BJ (cell line): ENCODE measurements at regions of chr6 and their contacts with region 1.

Region 1: GRCh38 chr6:111709615-111710398 is 104.1 kb upstream of the TRAF3IP2 start:
- DNase-seq: no peak
- H3K4me3 ChIP-seq: no peak overlapping the region
- H3K27me3 ChIP-seq: no peaks in the 10 kb centered on the region
- CTCF ChIP-seq: peak; percentile 53

Region 2: GRCh38 chr6:111777357-111777756 is 67.5 kb after region 1 on chr6:
- CTCF ChIA-PET with region 1: no interaction called
- POLR2A ChIA-PET with region 1: no interaction called
- DNase-seq: no peak
- H3K4me3 ChIP-seq: no peak overlapping the region
- H3K27me3 ChIP-seq: no peaks in the 10 kb centered on the region
- CTCF ChIP-seq: no peak

Region 3: DNA sequence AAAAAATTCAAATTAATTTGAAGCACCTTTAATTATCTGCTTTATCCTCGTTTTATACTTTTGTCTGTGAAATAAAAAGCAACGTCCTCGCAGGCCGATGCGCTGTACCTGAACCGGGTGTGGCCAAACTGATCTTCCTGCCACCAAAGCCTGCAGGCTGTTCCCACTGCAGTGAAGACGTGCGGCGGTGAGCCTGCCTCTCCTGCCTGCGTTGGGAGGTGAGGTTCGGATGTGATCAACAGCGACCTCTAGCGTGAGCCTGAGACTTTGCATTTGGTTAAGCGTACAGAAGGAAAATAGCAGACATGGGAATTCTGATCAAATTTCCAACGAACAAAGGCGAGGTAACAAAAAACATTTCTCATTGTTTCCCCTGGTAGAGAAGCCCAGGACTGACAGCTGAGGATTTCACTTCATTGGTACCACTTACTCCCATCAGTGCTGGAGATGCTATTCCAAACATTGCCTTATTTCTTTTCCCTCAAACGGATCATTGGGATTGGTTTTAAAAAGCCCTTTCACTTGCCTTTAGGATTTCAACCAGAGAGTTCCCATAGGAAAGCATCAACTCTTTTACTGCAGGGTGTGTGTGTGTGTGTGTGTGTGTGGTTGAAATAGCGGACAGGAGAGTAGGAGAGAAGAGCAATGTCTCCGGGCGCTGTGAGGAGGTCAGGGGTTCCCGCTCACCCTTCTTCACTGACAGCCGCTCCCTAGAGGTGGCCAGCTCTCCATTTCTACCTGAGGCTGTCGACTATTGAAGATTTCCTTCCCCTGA is 287.5 kb after region 1 on chr6:
- CTCF ChIA-PET with region 1: interaction called, 42 read pairs
- POLR2A ChIA-PET with region 1: interaction called, 5 read pairs
- DNase-seq: no peak
- H3K4me3 ChIP-seq: no peak overlapping the region
- H3K27me3 ChIP-seq: no peaks in the 10 kb centered on the region
- CTCF ChIP-seq: peak; percentile 86

Region 4: DNA sequence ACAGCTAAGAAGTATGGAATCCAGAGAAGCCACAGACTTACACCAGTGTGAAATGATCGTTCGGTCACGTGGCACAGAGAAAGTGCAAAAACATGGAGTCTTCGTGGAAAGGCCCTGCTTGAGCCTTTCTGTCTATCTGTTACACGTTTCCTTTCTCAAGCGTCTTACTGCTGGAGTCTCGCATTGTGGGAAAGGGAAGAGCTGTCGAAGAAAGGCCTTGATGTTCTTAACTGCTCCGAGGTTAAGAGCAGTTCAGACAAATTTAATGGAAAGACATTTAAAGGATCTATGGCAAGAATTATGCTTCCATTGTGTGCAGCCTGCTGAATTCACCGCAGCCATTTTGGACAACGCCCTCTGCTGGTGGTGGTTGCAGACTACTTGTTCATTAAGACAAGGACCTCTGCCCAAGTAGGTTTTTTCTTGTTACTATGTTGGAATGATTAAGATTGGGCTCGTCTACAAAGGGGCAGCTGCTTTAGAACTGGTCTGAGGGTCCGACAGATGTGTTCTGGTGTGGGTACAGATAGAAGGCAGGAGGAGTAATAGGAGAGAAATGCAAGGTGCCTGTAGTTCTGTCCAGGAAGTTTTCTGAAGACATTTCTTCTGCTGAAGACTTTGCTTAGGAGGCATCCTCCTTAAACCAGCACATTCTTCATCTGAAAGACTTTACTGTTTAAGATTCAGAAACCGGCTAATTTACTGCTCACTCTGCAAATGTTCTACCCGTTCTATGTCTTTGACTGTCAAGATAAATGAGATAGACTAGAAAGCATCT is 319.4 kb after region 1 on chr6:
- CTCF ChIA-PET with region 1: interaction called, 18 read pairs
- POLR2A ChIA-PET with region 1: no interaction called
- DNase-seq: no peak
- H3K4me3 ChIP-seq: no peak overlapping the region
- H3K27me3 ChIP-seq: peaks cover 5% of the 10 kb centered on the region; the same call in 1 of the 2 replicates
- CTCF ChIP-seq: peak; percentile 59

Region 5: DNA sequence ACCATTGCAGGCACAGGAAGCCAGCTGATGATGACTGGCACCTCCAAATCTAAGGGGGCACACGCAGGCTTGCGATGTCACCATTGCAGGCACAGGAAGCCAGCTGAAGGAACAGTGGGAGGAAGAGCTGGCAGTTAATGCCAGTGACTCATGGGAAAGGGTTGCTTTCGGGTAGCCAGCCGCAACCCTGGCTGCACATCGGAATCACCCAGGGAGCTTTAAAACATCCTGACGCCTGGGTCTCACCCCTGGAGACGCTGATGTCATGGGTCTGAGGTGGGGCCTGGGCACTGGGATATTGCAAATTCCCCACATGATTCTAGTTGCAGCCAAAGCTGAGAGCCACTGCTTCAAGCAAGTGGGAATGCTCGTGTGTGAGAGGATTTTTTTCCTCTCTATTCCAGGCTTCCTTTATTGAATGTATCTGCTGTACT is 328.0 kb after region 1 on chr6:
- CTCF ChIA-PET with region 1: interaction called, 82 read pairs
- POLR2A ChIA-PET with region 1: no interaction called
- DNase-seq: peak; percentile 86
- H3K4me3 ChIP-seq: no peak overlapping the region
- H3K27me3 ChIP-seq: no peaks in the 10 kb centered on the region
- CTCF ChIP-seq: no peak

Region 6: GRCh38 chr6:112043032-112044007 is 333.5 kb after region 1 on chr6:
- CTCF ChIA-PET with region 1: interaction called, 82 read pairs
- POLR2A ChIA-PET with region 1: interaction called, 3 read pairs
- DNase-seq: no peak
- H3K4me3 ChIP-seq: peak overlapping the region; percentile 61
- H3K27me3 ChIP-seq: no peaks in the 10 kb centered on the region
- CTCF ChIP-seq: peak; percentile 99